ENCODE measurements at regions of chr2 and their contacts with region 1.

Region 1: DNA sequence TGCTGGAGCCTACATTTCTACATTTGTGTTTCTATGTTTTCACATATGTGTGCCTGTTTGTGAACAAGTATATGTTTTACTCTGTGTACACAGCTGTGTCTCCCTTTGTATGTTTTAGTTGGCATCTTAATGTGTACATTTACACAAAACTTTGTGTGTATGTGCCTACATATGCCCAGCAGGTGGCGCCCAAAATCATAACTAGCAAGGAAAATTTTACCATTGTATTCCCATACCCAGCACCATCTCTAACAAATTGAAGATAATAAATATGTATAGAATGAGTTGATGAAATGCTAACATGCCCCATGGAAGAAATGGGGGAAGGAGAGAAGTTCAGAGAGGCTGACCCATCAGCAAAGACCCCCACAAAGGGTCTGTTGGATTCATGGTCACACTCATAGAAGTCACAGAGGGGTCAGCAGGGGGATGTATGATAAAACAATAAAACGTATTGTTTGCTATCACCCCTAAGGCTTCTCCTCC is 48.1 kb downstream of the PKDCC start:
- H3K4me3 ChIP-seq: no peak overlapping the region
- H3K27ac ChIP-seq: no peak overlapping the region
- H3K4me1 ChIP-seq: peaks cover 4% of the 10 kb centered on the region; the same call in 1 of the 2 replicates
- CTCF ChIP-seq: peak; percentile 58; the same call in 1 of the 2 replicates

Region 2: DNA sequence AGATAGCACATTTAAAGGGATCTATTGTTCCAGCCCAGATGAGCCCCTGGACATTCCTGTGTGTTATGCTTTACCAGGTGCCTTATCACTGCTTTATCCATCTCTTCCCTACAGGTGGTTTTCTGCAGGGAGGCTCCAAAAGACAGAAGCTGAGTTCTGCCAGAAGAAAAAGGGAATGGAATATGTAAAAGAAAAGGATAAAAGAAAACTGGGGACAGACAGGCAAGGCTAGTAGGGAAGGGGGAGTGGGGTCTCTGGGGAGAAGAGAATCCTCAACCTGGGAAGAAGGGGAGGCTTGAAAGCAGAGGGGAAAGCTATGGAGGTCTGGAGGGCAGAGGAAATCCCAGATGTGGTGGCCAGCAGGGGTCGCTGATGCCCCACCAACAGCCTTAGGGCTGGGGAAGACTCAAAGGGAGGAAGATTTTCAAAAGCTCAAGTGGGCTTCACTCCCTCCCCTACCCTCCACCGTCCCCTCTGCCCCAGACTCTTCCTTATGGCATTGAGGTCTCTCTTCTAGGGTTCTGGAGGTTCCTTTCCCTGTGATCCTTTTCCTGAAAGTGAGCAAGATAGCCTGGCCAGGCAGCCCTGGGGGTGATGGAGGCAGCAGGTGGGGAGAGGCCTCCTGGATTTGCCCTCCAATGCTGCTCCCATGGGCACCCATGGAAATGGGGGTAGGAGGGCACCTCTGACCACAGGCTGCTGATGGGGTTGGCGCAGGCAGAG is 226.3 kb before region 1 on chr2:
- CTCF ChIA-PET with region 1: interaction called, 369 read pairs
- POLR2A ChIA-PET with region 1: no interaction called
- H3K4me3 ChIP-seq: no peak overlapping the region
- H3K27ac ChIP-seq: no peak overlapping the region
- H3K4me1 ChIP-seq: peaks cover 4% of the 10 kb centered on the region
- CTCF ChIP-seq: peak; percentile 87

Region 3: GRCh38 chr2:41955316-41956043 is 140.5 kb before region 1 on chr2:
- CTCF ChIA-PET with region 1: no interaction called
- POLR2A ChIA-PET with region 1: no interaction called
- H3K4me3 ChIP-seq: no peak overlapping the region
- H3K27ac ChIP-seq: no peak overlapping the region
- H3K4me1 ChIP-seq: no peaks in the 10 kb centered on the region
- CTCF ChIP-seq: no peak

Region 4: DNA sequence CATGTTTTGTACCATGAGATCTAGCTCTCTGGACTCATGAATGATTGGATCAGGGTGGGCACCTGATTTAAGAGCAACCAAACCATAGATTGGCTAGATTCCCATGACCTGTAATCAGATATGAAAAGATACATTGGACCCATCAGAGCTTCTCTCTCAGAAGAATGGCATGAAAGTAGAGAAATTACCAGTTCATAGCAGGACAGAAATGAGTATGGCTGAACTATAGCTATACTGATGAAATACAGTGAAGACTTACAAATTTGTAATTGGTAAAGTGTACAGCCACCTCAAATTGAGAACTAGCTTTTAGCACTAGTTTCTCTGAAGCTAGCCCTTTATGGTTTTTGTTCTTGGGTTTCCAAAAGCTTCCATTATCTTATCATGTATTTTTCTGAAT is 54.2 kb after region 1 on chr2:
- CTCF ChIA-PET with region 1: interaction called, 13 read pairs
- POLR2A ChIA-PET with region 1: no interaction called
- H3K4me3 ChIP-seq: no peak overlapping the region
- H3K27ac ChIP-seq: no peak overlapping the region
- H3K4me1 ChIP-seq: peaks cover 4% of the 10 kb centered on the region; the same call in 1 of the 2 replicates
- CTCF ChIP-seq: no peak

Region 5: GRCh38 chr2:42196403-42197267 is 100.7 kb after region 1 on chr2:
- CTCF ChIA-PET with region 1: interaction called, 52 read pairs
- POLR2A ChIA-PET with region 1: interaction called, 3 read pairs
- H3K4me3 ChIP-seq: no peak overlapping the region
- H3K27ac ChIP-seq: peak overlapping the region; percentile 50
- H3K4me1 ChIP-seq: peaks cover 15% of the 10 kb centered on the region
- CTCF ChIP-seq: no peak; the same call in 1 of the 2 replicates

Region 6: DNA sequence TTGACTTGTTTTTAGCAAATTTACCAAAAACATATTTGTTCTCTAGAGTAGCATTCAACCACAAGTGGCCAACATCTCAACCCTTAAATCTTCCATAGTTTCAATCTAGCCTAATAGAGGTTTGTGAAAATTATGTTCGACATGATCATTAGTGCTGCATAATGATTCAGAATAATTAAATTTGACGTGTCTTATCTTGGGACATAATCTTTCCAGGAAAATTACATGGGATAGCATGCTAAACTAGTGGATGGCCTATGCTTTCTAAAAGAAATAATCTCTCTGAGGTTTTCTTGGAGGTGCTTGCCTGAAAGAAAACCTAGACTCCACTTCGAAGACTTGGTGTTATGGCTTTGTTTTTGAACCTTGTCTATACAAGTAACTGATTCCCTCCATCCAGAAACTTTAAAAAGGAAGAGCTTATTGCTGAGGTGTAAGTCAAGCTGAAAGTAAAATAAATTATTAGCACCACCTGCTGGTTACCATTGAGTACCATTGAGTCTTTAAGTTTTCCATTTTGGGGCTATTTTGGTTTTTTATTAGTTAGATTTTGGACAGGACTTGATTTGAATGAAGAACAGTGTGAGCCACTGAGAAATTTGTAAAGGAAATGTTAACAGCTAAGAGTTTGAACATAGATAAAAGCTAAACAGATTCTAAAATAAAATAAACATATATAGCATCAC is 232.3 kb after region 1 on chr2:
- CTCF ChIA-PET with region 1: interaction called, 29 read pairs
- POLR2A ChIA-PET with region 1: no interaction called
- H3K4me3 ChIP-seq: no peak overlapping the region
- H3K27ac ChIP-seq: no peak overlapping the region
- H3K4me1 ChIP-seq: no peaks in the 10 kb centered on the region
- CTCF ChIP-seq: no peak

Measured in HEK293 (cell line).